ENCODE measurements at regions of chr4 and their contacts with region 1.

Region 1: GRCh38 chr4:74623041-74623440 is 171.3 kb downstream of the BTC start:
- DNase-seq: no peak
- H3K4me3 ChIP-seq: no peak overlapping the region
- H3K27ac ChIP-seq: peak overlapping the region; percentile 83
- H3K4me1 ChIP-seq: peaks cover 28% of the 10 kb centered on the region
- H3K27me3 ChIP-seq: no peaks in the 10 kb centered on the region
- CTCF ChIP-seq: peak; percentile 55

Region 2: DNA sequence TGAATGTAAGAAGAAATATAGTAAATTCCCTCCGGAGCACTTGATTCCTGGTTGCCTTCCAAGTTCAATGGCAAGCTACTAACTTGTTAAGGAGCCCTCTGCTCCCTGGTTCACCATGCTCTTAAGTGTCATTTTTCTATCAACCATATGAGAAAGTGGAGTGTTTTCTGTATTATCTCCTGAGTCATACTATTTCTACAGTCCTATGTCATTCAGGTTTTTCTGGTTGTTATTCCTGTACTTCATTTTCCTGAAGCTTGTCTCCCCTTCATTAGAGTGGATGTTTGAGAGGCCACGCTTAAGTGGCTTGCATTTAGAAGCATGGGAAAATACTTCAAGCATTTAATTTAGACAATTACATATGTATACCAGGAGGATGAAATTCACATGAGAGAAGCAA is 329.5 kb before region 1 on chr4:
- CTCF ChIA-PET with region 1: no interaction called
- POLR2A ChIA-PET with region 1: no interaction called
- intact Hi-C with region 1: no loop called
- DNase-seq: peak in 1 of 2 experiments; percentile 45
- H3K4me3 ChIP-seq: no peak overlapping the region
- H3K27ac ChIP-seq: peak overlapping the region; percentile 29; the same call in 1 of the 2 replicates
- H3K4me1 ChIP-seq: peaks cover 8% of the 10 kb centered on the region
- H3K27me3 ChIP-seq: no peaks in the 10 kb centered on the region
- CTCF ChIP-seq: no peak

Region 3: DNA sequence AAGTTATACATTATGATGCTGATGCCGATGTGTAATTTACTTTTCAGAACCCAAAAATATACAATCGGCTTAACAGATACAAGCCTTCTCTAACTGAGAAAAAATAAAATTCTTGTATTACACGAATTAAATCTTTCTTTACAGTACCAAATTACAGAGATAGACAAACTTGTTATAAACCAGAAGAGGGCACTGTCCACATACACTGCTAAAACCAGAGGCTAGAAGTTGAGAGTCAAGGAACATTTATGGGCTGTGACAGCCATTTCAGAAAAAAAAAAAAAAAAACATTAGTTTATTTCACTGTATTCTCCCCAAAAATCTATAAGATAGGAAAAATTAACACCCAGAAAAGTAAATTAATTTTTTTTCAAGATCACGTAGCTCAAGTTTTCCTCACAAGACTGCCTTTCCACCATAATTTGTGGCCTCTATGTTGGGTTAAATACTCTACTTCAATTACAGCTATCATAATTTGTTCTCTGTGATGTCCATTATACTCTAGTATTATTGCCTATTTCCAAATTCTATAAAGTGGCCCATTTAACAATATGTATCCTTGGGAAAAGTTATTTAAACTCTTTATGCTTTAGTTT is 246.1 kb before region 1 on chr4:
- CTCF ChIA-PET with region 1: interaction called, 9 read pairs
- POLR2A ChIA-PET with region 1: no interaction called
- intact Hi-C with region 1: loop called (anchors 1 kb)
- DNase-seq: no peak
- H3K4me3 ChIP-seq: peak overlapping the region; percentile 55; the same call in 1 of the 2 replicates
- H3K27ac ChIP-seq: peak overlapping the region; percentile 100
- H3K4me1 ChIP-seq: peaks cover 33% of the 10 kb centered on the region
- H3K27me3 ChIP-seq: no peaks in the 10 kb centered on the region
- CTCF ChIP-seq: peak; percentile 70

Region 4: GRCh38 chr4:74451200-74451661 is 171.8 kb before region 1 on chr4:
- CTCF ChIA-PET with region 1: no interaction called
- POLR2A ChIA-PET with region 1: no interaction called
- intact Hi-C with region 1: loop called (anchors 5 kb)
- DNase-seq: peak; percentile 14 to 62
- H3K4me3 ChIP-seq: no peak overlapping the region
- H3K27ac ChIP-seq: peak overlapping the region; percentile 63
- H3K4me1 ChIP-seq: peaks cover 24% of the 10 kb centered on the region
- H3K27me3 ChIP-seq: no peaks in the 10 kb centered on the region
- CTCF ChIP-seq: no peak

Region 5: DNA sequence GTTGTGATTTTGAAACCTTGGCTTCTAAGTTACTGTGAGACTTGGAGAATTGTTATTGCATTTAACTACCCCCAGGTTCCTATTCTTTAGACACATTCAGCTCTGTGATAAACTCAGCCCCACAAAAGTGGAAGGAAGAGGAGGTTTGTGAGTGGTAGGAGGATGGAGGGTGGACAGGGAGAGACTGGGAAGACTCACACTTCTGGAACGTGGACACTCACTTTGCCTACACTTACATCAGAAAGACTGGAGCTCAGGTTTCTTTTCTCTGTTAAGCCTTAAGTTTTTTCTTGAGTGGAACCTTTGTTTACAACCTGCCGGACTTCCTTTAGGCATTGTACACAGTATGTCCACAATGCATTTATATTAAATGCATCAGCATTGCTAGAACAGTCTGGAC is 79.1 kb before region 1 on chr4:
- CTCF ChIA-PET with region 1: no interaction called
- POLR2A ChIA-PET with region 1: no interaction called
- intact Hi-C with region 1: loop called (anchors 2 kb)
- DNase-seq: no peak
- H3K4me3 ChIP-seq: no peak overlapping the region
- H3K27ac ChIP-seq: peak overlapping the region; percentile 55
- H3K4me1 ChIP-seq: peaks cover 17% of the 10 kb centered on the region
- H3K27me3 ChIP-seq: no peaks in the 10 kb centered on the region
- CTCF ChIP-seq: no peak

Region 6: DNA sequence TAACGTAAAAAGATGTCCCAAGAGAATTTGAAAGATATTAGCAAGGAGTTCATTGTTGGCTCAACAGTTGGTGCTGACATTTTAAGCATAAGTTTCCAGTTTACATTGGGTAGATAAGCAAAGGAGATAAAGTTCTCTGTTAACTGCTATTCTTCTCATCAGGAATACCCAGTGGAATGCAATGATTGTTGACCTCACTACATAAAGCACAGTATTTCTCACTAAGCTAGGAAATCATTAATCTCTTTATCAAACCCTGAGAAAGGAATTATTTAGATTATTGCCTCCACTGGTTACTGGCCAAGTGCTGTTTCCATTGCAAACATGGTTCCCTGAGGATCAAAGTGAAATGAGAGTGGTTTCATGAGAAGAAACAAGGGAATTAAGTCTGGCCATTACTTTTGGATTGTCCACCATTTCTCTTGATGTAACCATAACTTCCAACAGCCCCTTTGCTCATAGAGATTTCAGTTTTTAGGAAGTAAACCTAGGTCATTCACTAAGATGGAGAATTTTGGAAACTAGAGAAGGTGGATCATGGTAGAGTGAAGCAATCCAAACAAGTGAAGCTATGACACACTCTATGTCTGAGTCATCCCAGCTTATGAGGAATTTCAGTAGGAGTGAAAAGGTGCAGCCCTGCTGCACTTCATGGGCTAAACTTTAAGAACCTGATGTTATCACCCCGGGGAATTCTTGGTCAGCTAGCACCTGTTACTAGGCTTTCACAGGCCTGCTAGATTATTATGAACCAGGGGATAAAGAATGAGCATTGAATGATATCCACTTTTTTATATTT is 14.7 kb before region 1 on chr4:
- CTCF ChIA-PET with region 1: no interaction called
- POLR2A ChIA-PET with region 1: no interaction called
- intact Hi-C with region 1: no loop called
- DNase-seq: no peak
- H3K4me3 ChIP-seq: no peak overlapping the region
- H3K27ac ChIP-seq: no peak overlapping the region
- H3K4me1 ChIP-seq: no peaks in the 10 kb centered on the region
- H3K27me3 ChIP-seq: no peaks in the 10 kb centered on the region
- CTCF ChIP-seq: no peak

Region 7: DNA sequence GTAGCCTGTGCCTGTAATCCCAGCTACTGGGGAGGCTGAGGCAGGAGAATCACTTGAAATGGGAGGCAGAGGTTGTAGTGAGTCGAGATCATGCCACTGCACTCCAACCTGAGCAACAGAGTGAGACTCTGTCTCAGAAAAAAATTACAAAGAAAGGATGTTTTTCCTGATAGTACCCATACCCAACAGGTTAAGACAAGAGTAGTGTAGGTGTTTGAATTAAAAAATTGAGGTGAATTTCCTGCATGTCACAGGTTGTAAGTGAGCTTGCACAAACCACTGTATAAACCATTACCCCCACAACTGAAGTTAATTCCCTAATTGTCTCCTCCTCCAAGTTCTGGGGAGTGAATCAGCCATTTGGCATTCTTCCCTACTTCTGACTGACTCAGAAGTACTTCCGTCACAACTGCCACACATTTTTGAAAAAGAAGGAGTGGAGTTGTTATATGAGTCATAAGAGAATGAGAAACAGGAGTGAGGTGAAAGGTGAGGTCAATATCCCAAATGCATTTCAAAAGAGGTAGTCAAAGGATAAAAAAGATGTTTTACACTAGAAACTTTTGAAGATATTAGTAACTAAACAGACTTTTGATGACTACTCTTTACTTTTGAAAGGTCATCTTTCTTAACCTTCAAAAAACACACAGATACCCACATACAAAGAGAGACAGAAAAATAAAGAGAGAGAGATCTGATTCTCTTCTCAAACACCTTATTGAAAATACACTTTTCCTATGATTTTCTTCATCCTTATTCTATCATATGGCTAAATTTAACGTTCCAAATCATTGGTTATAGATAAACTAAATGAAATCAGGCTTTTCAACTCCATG is 36.8 kb after region 1 on chr4:
- CTCF ChIA-PET with region 1: no interaction called
- POLR2A ChIA-PET with region 1: no interaction called
- intact Hi-C with region 1: loop called (anchors 1 kb)
- DNase-seq: peak; percentile 53 to 94
- H3K4me3 ChIP-seq: no peak overlapping the region
- H3K27ac ChIP-seq: peak overlapping the region; percentile 91
- H3K4me1 ChIP-seq: peaks cover 37% of the 10 kb centered on the region
- H3K27me3 ChIP-seq: no peaks in the 10 kb centered on the region
- CTCF ChIP-seq: no peak